GM12878 (cell line): ENCODE measurements at regions of chr16 and their contacts with region 1.

Region 1: DNA sequence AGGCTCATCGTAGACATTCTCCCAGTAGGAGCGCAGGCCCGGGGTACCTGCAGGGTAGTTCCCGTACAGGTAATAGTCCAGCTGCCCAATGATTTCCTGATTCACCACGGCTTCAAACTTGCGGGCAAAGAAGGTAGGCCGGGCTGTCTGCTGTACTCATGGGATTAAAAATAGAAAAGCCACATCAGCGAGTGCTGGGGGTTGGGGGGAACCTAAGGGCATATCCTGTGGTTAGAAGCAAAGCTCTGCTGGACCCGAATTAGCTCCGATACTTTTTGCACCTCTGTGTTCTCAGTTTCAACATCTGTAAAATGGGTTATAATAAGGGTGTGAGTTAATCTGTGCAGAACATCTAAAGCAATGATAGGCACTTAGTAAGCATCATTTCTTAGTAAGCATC is 336.2 kb downstream of the XYLT1 start:
- DNase-seq: peak; percentile 82
- ATAC-seq: peak; percentile 97
- H3K4me3 ChIP-seq: no peak overlapping the region
- H3K27ac ChIP-seq: no peak overlapping the region
- H3K4me1 ChIP-seq: peaks cover 26% of the 10 kb centered on the region
- H3K27me3 ChIP-seq: no peaks in the 10 kb centered on the region
- CTCF ChIP-seq: no peak
- EP300 ChIP-seq: peak; percentile 42 to 77; a peak in 3 of 4 replicates
- POLR2A ChIP-seq: no peak
- RAD21 ChIP-seq: no peak

Region 2: DNA sequence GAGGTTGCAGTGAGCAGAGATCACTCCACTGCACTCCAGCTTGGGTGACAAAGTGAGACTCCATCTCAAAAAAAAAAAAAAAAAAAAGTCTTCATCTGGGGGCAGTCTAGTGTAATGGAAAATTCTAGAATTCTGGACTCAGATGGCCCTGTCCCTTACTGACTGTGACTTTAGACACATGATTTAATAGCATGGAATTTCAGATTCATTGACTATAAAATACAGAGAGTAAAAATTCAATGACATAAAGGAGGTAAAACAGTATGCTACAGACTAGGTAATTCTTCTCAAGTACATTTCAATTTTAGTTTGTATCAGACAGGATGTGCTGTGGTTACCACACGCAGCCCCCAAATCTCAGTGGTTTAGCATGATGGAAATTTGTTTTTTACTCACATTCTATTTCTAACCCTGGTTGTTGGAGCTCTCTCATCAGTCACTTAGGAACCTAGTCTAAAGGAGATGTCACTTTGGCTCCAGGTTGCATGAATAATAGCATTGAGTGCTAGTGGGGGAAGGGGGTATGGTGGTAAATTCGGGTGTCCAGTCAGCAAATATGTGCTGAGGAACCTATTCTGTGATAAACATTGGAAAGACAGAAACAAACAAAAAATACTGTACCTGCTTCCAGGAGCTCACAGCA is 107.9 kb before region 1 on chr16:
- CTCF ChIA-PET with region 1: interaction called, 3 read pairs
- POLR2A ChIA-PET with region 1: no interaction called
- RAD21 ChIA-PET with region 1: interaction called, 4 read pairs
- SMC1A ChIA-PET with region 1: interaction called, 14 read pairs
- in situ Hi-C with region 1: no loop called
- intact Hi-C with region 1: loop called (anchors 2 kb)
- DNase-seq: peak; percentile 92
- ATAC-seq: peak; percentile 83
- H3K4me3 ChIP-seq: peak overlapping the region; percentile 19; the same call in 1 of the 2 replicates
- H3K27ac ChIP-seq: peak overlapping the region; percentile 96
- H3K4me1 ChIP-seq: peaks cover 40% of the 10 kb centered on the region
- H3K27me3 ChIP-seq: no peaks in the 10 kb centered on the region
- CTCF ChIP-seq: no peak
- EP300 ChIP-seq: peak; percentile 91 to 97
- POLR2A ChIP-seq: no peak
- RAD21 ChIP-seq: peak; percentile 36

Region 3: GRCh38 chr16:17076092-17076754 is 58.4 kb before region 1 on chr16:
- CTCF ChIA-PET with region 1: interaction called, 12 read pairs
- POLR2A ChIA-PET with region 1: no interaction called
- RAD21 ChIA-PET with region 1: interaction called, 36 read pairs
- SMC1A ChIA-PET with region 1: interaction called, 18 read pairs
- in situ Hi-C with region 1: no loop called
- intact Hi-C with region 1: loop called (anchors 2 kb)
- DNase-seq: no peak
- ATAC-seq: peak; percentile 79
- H3K4me3 ChIP-seq: no peak overlapping the region
- H3K27ac ChIP-seq: no peak overlapping the region; the same call in 1 of the 2 replicates
- H3K4me1 ChIP-seq: peaks cover 20% of the 10 kb centered on the region
- H3K27me3 ChIP-seq: no peaks in the 10 kb centered on the region
- CTCF ChIP-seq: 0 out of 6 replicates have a peak, but pooled peaks of 1 of the 3 experiments have one; percentile 2
- EP300 ChIP-seq: no peak
- POLR2A ChIP-seq: no peak
- RAD21 ChIP-seq: no peak

Region 4: DNA sequence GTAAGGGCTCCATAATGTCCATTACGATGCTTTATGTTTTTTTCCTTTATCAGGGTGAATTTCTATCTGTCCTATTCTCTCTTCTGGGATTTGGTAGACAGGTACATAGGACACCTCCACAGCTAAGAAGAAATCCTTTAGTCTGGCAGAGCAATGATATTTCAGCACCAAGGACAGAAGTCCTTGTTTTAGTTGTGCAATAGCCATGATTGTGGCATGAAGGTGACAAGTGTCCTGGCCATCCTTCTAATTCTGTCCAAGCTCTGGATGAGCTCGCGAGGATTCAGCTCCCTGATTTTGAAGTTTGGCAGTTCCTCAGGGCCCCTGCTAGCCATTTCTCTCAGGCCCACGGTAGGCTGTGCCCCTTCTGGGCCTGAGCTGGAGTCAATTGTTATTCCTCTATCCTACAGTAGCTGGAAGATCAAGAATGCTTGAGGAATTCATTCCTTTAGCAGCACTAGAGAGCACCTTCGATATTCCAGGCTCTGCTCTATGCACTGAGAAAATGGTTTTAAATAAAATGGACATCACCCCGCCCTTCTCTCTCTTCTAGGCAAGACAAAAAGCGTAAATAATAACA is 15.4 kb after region 1 on chr16:
- CTCF ChIA-PET with region 1: interaction called, 4 read pairs
- POLR2A ChIA-PET with region 1: no interaction called
- RAD21 ChIA-PET with region 1: interaction called, 3 read pairs
- SMC1A ChIA-PET with region 1: interaction called, 12 read pairs
- in situ Hi-C with region 1: no loop called
- intact Hi-C with region 1: no loop called
- DNase-seq: no peak
- ATAC-seq: no peak
- H3K4me3 ChIP-seq: no peak overlapping the region
- H3K27ac ChIP-seq: no peak overlapping the region
- H3K4me1 ChIP-seq: 0 out of 2 replicates have a peak, but pooled peaks cover 3% of the 10 kb centered on the region
- H3K27me3 ChIP-seq: no peaks in the 10 kb centered on the region
- CTCF ChIP-seq: no peak
- EP300 ChIP-seq: no peak
- POLR2A ChIP-seq: no peak
- RAD21 ChIP-seq: no peak

Region 5: DNA sequence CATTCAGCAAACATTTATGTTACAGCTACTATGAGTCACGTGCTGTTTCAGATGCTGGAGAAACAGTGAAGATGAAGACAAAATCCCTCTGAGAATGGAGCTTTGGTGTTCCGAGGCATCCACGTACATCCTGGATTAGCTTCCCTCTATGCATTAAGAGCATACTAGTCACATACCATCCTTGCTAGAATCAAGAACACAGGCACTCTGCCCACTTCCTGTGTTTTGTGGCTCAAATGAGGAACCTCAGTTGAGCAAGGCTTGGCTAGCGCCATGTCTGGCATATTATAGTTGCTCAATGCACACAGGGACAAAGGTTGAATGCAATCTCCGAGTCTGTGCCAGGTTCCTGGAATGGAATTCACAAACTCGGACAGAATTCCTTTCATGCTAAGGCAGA is 38.7 kb after region 1 on chr16:
- CTCF ChIA-PET with region 1: no interaction called
- POLR2A ChIA-PET with region 1: no interaction called
- RAD21 ChIA-PET with region 1: no interaction called
- SMC1A ChIA-PET with region 1: no interaction called
- in situ Hi-C with region 1: no loop called
- intact Hi-C with region 1: no loop called
- DNase-seq: no peak
- ATAC-seq: no peak
- H3K4me3 ChIP-seq: no peak overlapping the region
- H3K27ac ChIP-seq: no peak overlapping the region
- H3K4me1 ChIP-seq: peaks cover 6% of the 10 kb centered on the region
- H3K27me3 ChIP-seq: no peaks in the 10 kb centered on the region
- CTCF ChIP-seq: no peak
- EP300 ChIP-seq: no peak
- POLR2A ChIP-seq: no peak
- RAD21 ChIP-seq: no peak

Region 6: GRCh38 chr16:17728196-17728595 is 593.6 kb after region 1 on chr16:
- CTCF ChIA-PET with region 1: no interaction called
- POLR2A ChIA-PET with region 1: no interaction called
- RAD21 ChIA-PET with region 1: no interaction called
- SMC1A ChIA-PET with region 1: no interaction called
- in situ Hi-C with region 1: no loop called
- intact Hi-C with region 1: no loop called
- DNase-seq: no peak
- ATAC-seq: no peak
- H3K4me3 ChIP-seq: no peak overlapping the region
- H3K27ac ChIP-seq: no peak overlapping the region
- H3K4me1 ChIP-seq: no peaks in the 10 kb centered on the region
- H3K27me3 ChIP-seq: no peaks in the 10 kb centered on the region
- CTCF ChIP-seq: no peak
- EP300 ChIP-seq: no peak
- POLR2A ChIP-seq: no peak
- RAD21 ChIP-seq: no peak